A673 (cell line): ENCODE measurements at regions of chr16 and their contacts with region 1.

Region 1: GRCh38 chr16:75198135-75198600 is 8.8 kb downstream of the CTRB2 start:
- DNase-seq: peak; percentile 26
- H3K4me3 ChIP-seq: no peak overlapping the region
- H3K27ac ChIP-seq: no peak overlapping the region
- H3K4me1 ChIP-seq: no peaks in the 10 kb centered on the region
- H3K27me3 ChIP-seq: no peaks in the 10 kb centered on the region
- CTCF ChIP-seq: no peak

Region 2: DNA sequence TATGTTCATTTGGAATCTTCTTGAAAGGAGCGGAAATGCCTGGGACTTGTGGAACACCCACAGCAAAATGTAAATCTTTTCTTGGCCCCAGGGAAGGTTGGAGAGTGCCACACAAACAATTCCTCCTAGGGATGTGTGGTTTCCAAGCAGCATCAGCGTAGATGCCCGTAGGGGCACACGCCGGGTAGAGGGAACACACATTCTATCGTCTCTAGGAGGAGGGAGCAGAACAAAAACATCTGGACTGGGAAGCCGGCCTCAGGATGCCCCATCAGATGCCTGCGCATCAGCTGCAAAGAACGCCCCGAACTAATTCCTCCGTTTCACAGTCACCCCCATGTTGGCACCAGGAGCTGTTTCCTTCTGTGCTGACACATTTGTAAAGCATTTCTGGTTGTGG is 1792.3 kb before region 1 on chr16:
- CTCF ChIA-PET with region 1: no interaction called
- POLR2A ChIA-PET with region 1: no interaction called
- intact Hi-C with region 1: no loop called
- DNase-seq: peak; percentile 27
- H3K4me3 ChIP-seq: no peak overlapping the region
- H3K27ac ChIP-seq: no peak overlapping the region
- H3K4me1 ChIP-seq: no peaks in the 10 kb centered on the region
- H3K27me3 ChIP-seq: peaks cover 26% of the 10 kb centered on the region
- CTCF ChIP-seq: no peak

Region 3: GRCh38 chr16:75110637-75111513 is 87.3 kb before region 1 on chr16:
- CTCF ChIA-PET with region 1: no interaction called
- POLR2A ChIA-PET with region 1: no interaction called
- intact Hi-C with region 1: no loop called
- DNase-seq: peak; percentile 91
- H3K4me3 ChIP-seq: peak overlapping the region; percentile 39
- H3K27ac ChIP-seq: peak overlapping the region; percentile 41
- H3K4me1 ChIP-seq: peaks cover 46% of the 10 kb centered on the region
- H3K27me3 ChIP-seq: no peaks in the 10 kb centered on the region
- CTCF ChIP-seq: peak; percentile 93

Region 4: DNA sequence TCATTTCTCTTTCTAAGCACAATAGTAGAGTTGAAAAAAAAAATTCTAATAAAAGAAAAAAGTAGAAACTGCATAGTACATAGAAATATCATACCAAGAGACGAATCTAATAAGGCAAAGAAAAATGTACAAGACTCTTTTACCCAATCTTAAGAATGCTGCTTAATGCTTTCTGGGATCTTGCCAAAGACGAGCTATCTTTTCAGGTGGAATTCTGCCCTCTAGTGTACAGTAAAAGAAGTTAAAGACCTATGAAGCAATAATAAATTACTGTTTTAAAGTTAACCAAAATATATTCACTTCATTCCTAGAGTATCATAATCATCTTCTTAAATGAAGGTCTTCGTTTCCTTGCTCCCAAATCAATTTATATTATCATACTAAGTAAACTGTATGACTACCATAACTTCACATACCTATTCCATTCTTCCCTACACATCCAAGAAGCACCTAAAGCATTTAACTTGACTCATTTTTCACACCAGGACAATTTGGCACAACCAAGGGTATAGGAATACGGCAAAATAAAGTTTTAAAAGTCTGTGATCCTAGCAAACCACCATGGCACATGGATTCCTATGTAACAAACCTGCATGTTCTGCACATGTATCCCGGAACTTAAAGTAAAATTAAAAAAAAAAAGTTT is 187.5 kb after region 1 on chr16:
- CTCF ChIA-PET with region 1: interaction called, 42 read pairs
- POLR2A ChIA-PET with region 1: no interaction called
- intact Hi-C with region 1: loop called (anchors 1 kb)
- DNase-seq: peak; percentile 85
- H3K4me3 ChIP-seq: no peak overlapping the region
- H3K27ac ChIP-seq: no peak overlapping the region
- H3K4me1 ChIP-seq: peaks cover 5% of the 10 kb centered on the region
- H3K27me3 ChIP-seq: no peaks in the 10 kb centered on the region
- CTCF ChIP-seq: peak; percentile 75

Region 5: GRCh38 chr16:75402821-75403475 is 204.8 kb after region 1 on chr16:
- CTCF ChIA-PET with region 1: interaction called, 6 read pairs
- POLR2A ChIA-PET with region 1: no interaction called
- intact Hi-C with region 1: loop called (anchors 1 kb)
- DNase-seq: peak; percentile 65
- H3K4me3 ChIP-seq: no peak overlapping the region
- H3K27ac ChIP-seq: no peak overlapping the region
- H3K4me1 ChIP-seq: peaks cover 9% of the 10 kb centered on the region
- H3K27me3 ChIP-seq: no peaks in the 10 kb centered on the region
- CTCF ChIP-seq: peak; percentile 81

Region 6: GRCh38 chr16:75464130-75464918 is 266.2 kb after region 1 on chr16 and contains the start of gene TMEM170A:
- CTCF ChIA-PET with region 1: interaction called, 6 read pairs
- POLR2A ChIA-PET with region 1: no interaction called
- intact Hi-C with region 1: loop called (anchors 2 kb)
- DNase-seq: peak; percentile 99
- H3K4me3 ChIP-seq: peak within 1 kb of the TSS; percentile 76
- H3K27ac ChIP-seq: peak within 1 kb of the TSS; percentile 92
- H3K4me1 ChIP-seq: peaks cover 2% of the 10 kb centered on the region
- H3K27me3 ChIP-seq: no peaks in the 10 kb centered on the region
- CTCF ChIP-seq: peak; percentile 100
- total RNA-seq, gene TMEM170A: 25.9 and 30.4 TPM in 2 replicates

Region 7: DNA sequence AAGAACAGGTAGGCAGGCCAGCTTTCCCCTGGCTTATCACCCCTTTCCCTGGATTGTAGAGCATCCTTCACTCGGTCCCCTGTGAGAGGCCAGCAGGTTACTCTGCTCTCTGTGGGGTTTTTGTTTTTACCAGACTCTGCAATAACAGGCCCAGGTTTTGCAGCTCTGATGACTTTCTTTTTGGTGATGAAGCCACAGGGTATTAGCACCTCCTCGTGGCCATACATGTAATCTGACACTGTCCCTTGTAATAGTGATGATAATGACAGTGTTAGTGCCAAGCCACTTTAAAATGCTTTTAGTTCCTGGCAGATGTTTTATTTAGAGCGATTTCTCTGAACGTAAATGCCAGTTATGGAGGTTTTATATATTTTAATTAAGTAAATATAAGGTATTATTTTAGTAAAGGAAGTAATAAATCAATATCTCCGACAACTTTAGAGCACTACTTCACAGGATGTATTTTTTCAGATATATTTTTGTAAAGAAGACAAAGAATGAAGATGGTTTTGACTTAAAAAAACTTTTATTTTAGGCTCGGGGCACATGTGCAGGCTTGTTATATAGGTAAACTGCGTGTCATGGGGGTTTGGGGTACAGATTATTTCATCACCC is 566.1 kb after region 1 on chr16:
- CTCF ChIA-PET with region 1: interaction called, 5 read pairs
- POLR2A ChIA-PET with region 1: no interaction called
- intact Hi-C with region 1: loop called (anchors 1 kb)
- DNase-seq: peak; percentile 69
- H3K4me3 ChIP-seq: no peak overlapping the region
- H3K27ac ChIP-seq: no peak overlapping the region
- H3K4me1 ChIP-seq: no peaks in the 10 kb centered on the region
- H3K27me3 ChIP-seq: no peaks in the 10 kb centered on the region
- CTCF ChIP-seq: peak; percentile 89